ENCODE measurements at regions of chr11 and their contacts with region 1.

Region 1: GRCh38 chr11:66408488-66409214 is 12.2 kb upstream of the NPAS4 start:
- DNase-seq: peak; percentile 85 to 100
- H3K4me3 ChIP-seq: peak overlapping the region; percentile 8 to 68 (median 30)
- H3K27ac ChIP-seq: no peak overlapping the region
- H3K4me1 ChIP-seq: peaks cover 0 to 14% (median 11%) of the 10 kb centered on the region in 4 experiments; a peak in 6 of 7 replicates
- H3K27me3 ChIP-seq: peaks cover 0 to 10% (median 2%) of the 10 kb centered on the region in 4 experiments; a peak in 3 of 7 replicates
- CTCF ChIP-seq: peak; percentile 99 to 100 (median 100)
- EP300 ChIP-seq: no peak; a peak in 1 of 3 replicates
- POLR2A ChIP-seq: peak in 1 of 2 experiments; percentile 54; a peak in 2 of 3 replicates
- RAD21 ChIP-seq: peak; percentile 98 to 99

Region 2: GRCh38 chr11:66421492-66422205 is 13.0 kb after region 1 on chr11:
- CTCF ChIA-PET with region 1: interaction called, 202 read pairs
- POLR2A ChIA-PET with region 1: interaction called, 78 read pairs
- DNase-seq: peak; percentile 85 to 99
- H3K4me3 ChIP-seq: peak overlapping the region; percentile 17 to 61 (median 54); a peak in 7 of 8 replicates
- H3K27ac ChIP-seq: no peak overlapping the region
- H3K4me1 ChIP-seq: peaks cover 3 to 20% (median 8%) of the 10 kb centered on the region in 4 experiments
- H3K27me3 ChIP-seq: peaks cover 13 to 28% (median 26%) of the 10 kb centered on the region in 4 experiments
- CTCF ChIP-seq: peak in 1 of 3 experiments; percentile 25; a peak in 1 of 4 replicates
- EP300 ChIP-seq: peak; percentile 39 to 59; a peak in 2 of 3 replicates
- POLR2A ChIP-seq: peak in 1 of 2 experiments; percentile 22; a peak in 1 of 3 replicates
- RAD21 ChIP-seq: peak in 1 of 2 experiments; percentile 49; a peak in 2 of 4 replicates

Region 3: GRCh38 chr11:66429983-66430602 is 21.4 kb after region 1 on chr11:
- CTCF ChIA-PET with region 1: interaction called, 259 read pairs
- POLR2A ChIA-PET with region 1: interaction called, 78 read pairs
- DNase-seq: peak; percentile 29 to 91
- H3K4me3 ChIP-seq: no peak overlapping the region
- H3K27ac ChIP-seq: no peak overlapping the region
- H3K4me1 ChIP-seq: no peaks in the 10 kb centered on the region
- H3K27me3 ChIP-seq: no peaks in the 10 kb centered on the region; a peak in 1 of 7 replicates
- CTCF ChIP-seq: peak; percentile 91 to 97 (median 91)
- EP300 ChIP-seq: no peak
- POLR2A ChIP-seq: no peak
- RAD21 ChIP-seq: peak; percentile 91 to 94

Region 4: GRCh38 chr11:66466225-66467027 is 57.8 kb after region 1 on chr11 and contains the start of gene PELI3:
- CTCF ChIA-PET with region 1: interaction called, 39 read pairs
- POLR2A ChIA-PET with region 1: no interaction called
- DNase-seq: peak; percentile 90 to 99
- H3K4me3 ChIP-seq: peak within 1 kb of the TSS; percentile 58 to 78 (median 70)
- H3K27ac ChIP-seq: peak within 1 kb of the TSS; percentile 21; the same call in 1 of the 2 replicates
- H3K4me1 ChIP-seq: peaks cover 7 to 25% (median 14%) of the 10 kb centered on the region in 4 experiments
- H3K27me3 ChIP-seq: no peaks in the 10 kb centered on the region; a peak in 1 of 7 replicates
- CTCF ChIP-seq: no peak
- EP300 ChIP-seq: no peak
- POLR2A ChIP-seq: peak in 1 of 2 experiments; percentile 49; a peak in 1 of 3 replicates
- RAD21 ChIP-seq: peak in 1 of 2 experiments; percentile 12; a peak in 1 of 4 replicates
- total RNA-seq, gene PELI3: 7.6 TPM in 2 replicates